IMR-90 (cell line): ENCODE measurements at regions of chr1 and their contacts with region 1.

Region 1: DNA sequence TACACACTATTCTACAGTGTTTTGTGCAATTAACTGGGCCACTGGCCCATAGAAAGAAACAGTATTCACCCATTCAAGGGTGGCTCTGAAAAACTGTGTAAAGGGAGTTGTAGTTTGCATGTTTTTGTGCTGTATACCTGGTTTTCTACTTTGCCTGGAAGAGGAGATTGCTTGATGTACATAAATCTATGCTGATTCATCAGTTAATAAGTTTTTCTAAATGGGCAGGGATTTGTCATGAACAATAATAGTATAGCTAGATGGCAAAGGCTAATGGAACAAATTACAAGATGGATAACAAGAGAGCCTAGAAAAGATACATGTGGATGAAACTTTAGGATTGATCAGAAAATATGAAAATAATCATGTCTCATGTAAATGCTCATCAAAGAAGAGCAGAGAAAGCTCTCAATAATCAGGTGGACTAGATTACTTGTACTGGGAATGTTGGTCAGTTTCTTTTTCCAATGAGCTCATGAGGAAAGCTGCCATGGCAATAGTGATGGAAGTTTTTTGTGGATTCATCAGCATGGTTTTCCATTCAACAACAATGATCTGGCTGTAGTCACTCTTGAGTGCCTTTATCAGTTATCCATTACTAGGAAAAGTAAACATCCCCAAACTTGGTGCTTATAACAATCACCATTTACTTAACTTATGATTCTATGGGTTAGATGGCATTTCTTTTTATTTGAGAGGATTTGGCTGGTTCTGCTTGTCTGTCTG is 602.8 kb downstream of the BRINP3 start:
- DNase-seq: no peak
- ATAC-seq: no peak
- H3K4me3 ChIP-seq: no peak overlapping the region
- H3K27ac ChIP-seq: no peak overlapping the region
- H3K4me1 ChIP-seq: no peaks in the 10 kb centered on the region
- H3K27me3 ChIP-seq: no peaks in the 10 kb centered on the region
- CTCF ChIP-seq: no peak
- POLR2A ChIP-seq: no peak
- RAD21 ChIP-seq: no peak

Region 2: GRCh38 chr1:189891485-189891884 is 16.6 kb after region 1 on chr1:
- CTCF ChIA-PET with region 1: interaction called, 3 read pairs
- POLR2A ChIA-PET with region 1: no interaction called
- dilution Hi-C with region 1: no loop called
- in situ Hi-C with region 1: no loop called
- intact Hi-C with region 1: loop called (anchors 2 kb)
- DNase-seq: no peak
- ATAC-seq: no peak
- H3K4me3 ChIP-seq: no peak overlapping the region
- H3K27ac ChIP-seq: no peak overlapping the region
- H3K4me1 ChIP-seq: no peaks in the 10 kb centered on the region
- H3K27me3 ChIP-seq: no peaks in the 10 kb centered on the region
- CTCF ChIP-seq: no peak
- POLR2A ChIP-seq: no peak
- RAD21 ChIP-seq: no peak